Sigmoid colon (tissue), 7 donors: ENCODE measurements at regions of chr4 and their contacts with region 1.

Region 1: DNA sequence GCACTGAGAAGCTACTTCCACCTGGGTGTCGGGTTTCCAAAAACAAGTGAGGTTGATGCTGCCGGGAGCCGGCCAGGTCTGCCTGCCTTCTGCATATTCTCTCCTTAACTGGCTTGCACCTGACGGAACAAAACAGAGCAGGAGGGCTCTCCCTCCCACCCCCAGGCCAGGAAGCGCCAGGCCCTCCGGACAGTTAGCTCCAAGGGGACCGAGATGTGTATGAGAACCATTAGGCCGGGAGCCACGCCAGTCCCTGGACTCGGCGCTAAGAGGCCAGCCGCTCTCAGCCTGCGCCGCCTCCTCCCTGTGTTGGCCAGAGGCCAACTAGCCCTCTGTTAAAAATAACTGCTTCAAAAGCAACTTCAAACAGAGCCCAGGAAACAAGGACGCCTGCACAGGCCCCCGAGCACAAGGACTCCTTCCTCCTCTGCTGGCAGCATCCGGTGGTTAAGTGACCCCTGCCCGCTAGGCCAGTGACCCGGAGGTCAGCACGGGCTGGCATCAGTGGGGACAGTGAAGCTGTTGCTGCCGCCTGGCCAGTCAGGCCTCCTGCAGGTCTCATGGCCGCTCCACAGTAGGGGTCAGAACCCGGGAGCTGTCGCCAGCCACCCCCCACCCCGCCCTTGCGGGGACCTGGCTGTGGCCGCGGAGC is 107.9 kb downstream of the ABLIM2 start:
- DNase-seq: peak; percentile 93
- H3K4me3 ChIP-seq: peak overlapping the region in 3 of 4 donors; percentile 15 to 18 (median 16)
- H3K27ac ChIP-seq: peak overlapping the region; percentile 24 to 72 (median 52)
- H3K4me1 ChIP-seq: peaks cover 0 to 12% (median 12%) of the 10 kb centered on the region in 4 donors
- H3K27me3 ChIP-seq: no peaks in the 10 kb centered on the region
- CTCF ChIP-seq: no peak
- EP300 ChIP-seq: no peak
- POLR2A ChIP-seq: no peak

Region 2: GRCh38 chr4:8110071-8110986 is 59.6 kb after region 1 on chr4:
- intact Hi-C with region 1: no loop called
- DNase-seq: no peak
- H3K4me3 ChIP-seq: no peak overlapping the region
- H3K27ac ChIP-seq: no peak overlapping the region
- H3K4me1 ChIP-seq: no peaks in the 10 kb centered on the region
- H3K27me3 ChIP-seq: no peaks in the 10 kb centered on the region
- CTCF ChIP-seq: no peak
- EP300 ChIP-seq: no peak
- POLR2A ChIP-seq: no peak

Region 3: DNA sequence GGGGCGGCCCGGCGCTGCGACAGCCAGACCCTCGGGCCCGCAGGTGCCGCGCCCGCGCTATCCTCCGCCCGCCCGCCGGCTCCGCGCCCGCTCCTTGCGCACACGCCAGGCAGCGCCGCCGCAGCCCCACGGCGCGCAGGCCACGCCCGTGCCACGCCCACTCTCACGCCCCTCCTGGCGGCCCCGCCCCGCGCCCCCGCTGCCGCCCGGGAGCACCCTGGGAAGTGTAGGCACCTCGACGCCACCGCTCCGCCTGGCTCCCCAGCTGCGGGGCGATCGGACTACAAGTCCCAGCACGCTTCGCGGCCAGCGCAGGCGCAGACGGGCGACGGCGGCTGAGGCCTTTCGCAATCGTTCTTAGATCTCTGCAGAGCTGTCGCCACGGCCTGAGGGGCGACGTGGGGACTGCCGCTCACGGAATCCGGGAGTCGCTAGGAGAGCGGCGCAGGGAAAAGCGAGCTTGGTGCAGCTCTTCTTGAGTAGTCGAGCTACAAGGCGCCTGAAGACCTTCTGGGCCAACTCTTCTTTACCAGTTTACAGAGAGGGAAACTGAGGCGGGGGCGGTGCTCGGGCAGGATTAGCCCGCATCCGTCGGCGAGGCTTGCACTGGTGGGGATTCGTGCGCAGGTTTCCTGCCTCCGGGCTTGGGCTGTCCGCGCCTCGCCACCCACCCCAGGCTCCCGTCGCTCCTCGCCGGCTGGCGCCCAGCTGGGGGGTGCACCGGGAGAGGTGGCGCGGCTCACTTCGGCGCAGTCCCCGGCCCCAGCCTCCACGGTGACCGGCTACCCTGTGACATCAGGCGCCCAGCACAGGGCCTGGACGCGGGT is 108.2 kb after region 1 on chr4 and contains the start of gene ABLIM2:
- intact Hi-C with region 1: loop called (anchors 5 kb)
- DNase-seq: peak; percentile 99
- H3K4me3 ChIP-seq: peak within 1 kb of the TSS; percentile 68 to 98 (median 84)
- H3K27ac ChIP-seq: peak within 1 kb of the TSS; percentile 66 to 81 (median 76)
- H3K4me1 ChIP-seq: peaks cover 0 to 25% (median 23%) of the 10 kb centered on the region in 4 donors
- H3K27me3 ChIP-seq: peaks cover 7 to 12% (median 11%) of the 10 kb centered on the region in 3 donors
- CTCF ChIP-seq: no peak
- EP300 ChIP-seq: no peak
- POLR2A ChIP-seq: peak; percentile 52 to 55
- total RNA-seq, gene ABLIM2: 3.1 to 8.9 (median 5.6) TPM